Activated B cell treated with CpG ODN at 0.5 μM for 24 hours (primary cell): ENCODE measurements at regions of chr6 and their contacts with region 1.

Region 1: GRCh38 chr6:5517796-5518195 is 256.5 kb downstream of the FARS2 start:
- DNase-seq: no peak
- ATAC-seq: no peak
- H3K4me3 Mint-ChIP-seq: no peak overlapping the region
- H3K27ac Mint-ChIP-seq: no peak overlapping the region
- H3K4me1 Mint-ChIP-seq: peaks cover 16% of the 10 kb centered on the region
- H3K27me3 Mint-ChIP-seq: no peaks in the 10 kb centered on the region
- CTCF ChIP-seq: no peak

Region 2: DNA sequence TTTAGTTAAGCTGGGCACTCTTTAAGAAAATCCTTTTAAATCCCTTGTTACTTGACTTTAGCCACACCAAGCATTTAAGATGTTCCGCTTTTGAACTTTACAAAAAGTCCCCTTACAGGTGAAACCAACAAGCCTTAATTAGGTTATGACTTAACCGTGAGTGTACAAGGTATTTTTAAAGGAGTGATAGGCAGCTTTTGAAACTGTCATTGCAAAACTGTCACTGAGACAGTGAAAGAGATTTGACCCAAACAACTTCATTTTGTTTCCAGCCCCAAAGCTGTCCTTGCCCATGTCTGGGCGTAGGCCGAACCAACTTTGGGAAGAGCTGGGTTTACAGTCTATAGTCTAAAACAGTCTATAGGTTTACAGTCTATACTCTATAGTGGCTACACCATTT is 48.9 kb after region 1 on chr6:
- CTCF ChIA-PET with region 1: no interaction called
- POLR2A ChIA-PET with region 1: no interaction called
- intact Hi-C with region 1: loop called (anchors 5 kb)
- DNase-seq: no peak
- ATAC-seq: no peak
- H3K4me3 Mint-ChIP-seq: no peak overlapping the region
- H3K27ac Mint-ChIP-seq: peak overlapping the region; percentile 35
- H3K4me1 Mint-ChIP-seq: peaks cover 21% of the 10 kb centered on the region
- H3K27me3 Mint-ChIP-seq: no peaks in the 10 kb centered on the region
- CTCF ChIP-seq: no peak